Tibial artery (tissue), 4 donors: ENCODE measurements at regions of chr1 and their contacts with region 1.

Region 1: GRCh38 chr1:93447516-93448291 is at the start of gene FNBP1L:
- DNase-seq: peak in 1 of 2 donors; percentile 57
- H3K4me3 ChIP-seq: peak within 1 kb of the TSS; percentile 60 to 93
- H3K27ac ChIP-seq: peak within 1 kb of the TSS; percentile 39 to 63
- H3K4me1 ChIP-seq: peaks cover 0 to 26% (median 17%) of the 10 kb centered on the region in 4 donors
- H3K27me3 ChIP-seq: peaks cover 0 to 33% of the 10 kb centered on the region in 2 donors
- CTCF ChIP-seq: no peak

Region 2: GRCh38 chr1:93591676-93592550 is 144.2 kb after region 1 on chr1:
- intact Hi-C with region 1: loop called (anchors 10 kb)
- DNase-seq: no peak
- H3K4me3 ChIP-seq: no peak overlapping the region
- H3K27ac ChIP-seq: peak overlapping the region; percentile 63 to 66
- H3K4me1 ChIP-seq: peaks cover 0 to 61% (median 43%) of the 10 kb centered on the region in 4 donors
- H3K27me3 ChIP-seq: no peaks in the 10 kb centered on the region
- CTCF ChIP-seq: no peak

Region 3: GRCh38 chr1:93722081-93723031 is 274.7 kb after region 1 on chr1:
- intact Hi-C with region 1: no loop called
- DNase-seq: peak in 1 of 2 donors; percentile 79
- H3K4me3 ChIP-seq: no peak overlapping the region
- H3K27ac ChIP-seq: peak overlapping the region; percentile 62 to 71
- H3K4me1 ChIP-seq: peaks cover 0 to 44% (median 29%) of the 10 kb centered on the region in 4 donors
- H3K27me3 ChIP-seq: no peaks in the 10 kb centered on the region
- CTCF ChIP-seq: peak in 1 of 2 experiments; percentile 14

Region 4: GRCh38 chr1:93846211-93846991 is 398.7 kb after region 1 on chr1:
- intact Hi-C with region 1: loop called (anchors 10 kb)
- DNase-seq: peak; percentile 91 to 93
- H3K4me3 ChIP-seq: peak overlapping the region; percentile 85 to 88
- H3K27ac ChIP-seq: peak overlapping the region; percentile 97 to 98
- H3K4me1 ChIP-seq: peaks cover 0 to 29% (median 11%) of the 10 kb centered on the region in 4 donors
- H3K27me3 ChIP-seq: no peaks in the 10 kb centered on the region
- CTCF ChIP-seq: peak; percentile 34 to 36